HCT116 (cell line): ENCODE measurements at regions of chr5 and their contacts with region 1.

Region 1: DNA sequence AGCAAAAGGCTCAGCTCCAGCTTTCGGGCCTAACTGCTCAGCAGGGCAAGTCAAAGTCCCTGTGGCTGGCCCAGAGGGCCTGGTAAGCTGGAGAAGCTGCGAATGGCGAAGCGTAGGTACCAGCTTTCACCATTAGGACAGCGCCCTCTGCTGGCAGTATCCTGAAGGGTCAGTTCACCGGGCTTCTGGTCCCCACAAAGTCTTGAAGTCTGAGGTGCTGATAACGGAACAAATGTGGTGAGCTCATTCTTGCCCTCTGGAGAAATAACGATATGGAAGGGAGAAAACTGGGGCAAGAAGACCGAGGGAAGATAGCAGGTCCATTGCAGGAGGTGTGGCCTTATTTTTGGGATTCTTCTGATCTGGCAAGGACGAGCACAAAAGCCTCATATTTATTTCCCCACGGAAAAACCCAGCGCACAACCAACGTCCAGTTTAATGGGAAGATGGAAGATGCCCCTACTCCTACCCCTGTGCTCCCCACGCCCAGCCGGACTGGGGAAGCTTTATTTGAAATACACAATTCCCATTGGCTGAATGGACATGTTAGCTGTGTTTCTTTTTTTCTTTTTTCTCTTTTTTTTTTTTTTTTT is 7.2 kb downstream of the SOWAHA start:
- DNase-seq: peak; percentile 81
- ATAC-seq: peak; percentile 94
- H3K4me3 ChIP-seq: no peak overlapping the region
- H3K27ac ChIP-seq: no peak overlapping the region
- H3K4me1 ChIP-seq: peaks cover 0 to 11% of the 10 kb centered on the region in 2 experiments; a peak in 1 of 4 replicates
- H3K27me3 ChIP-seq: no peaks in the 10 kb centered on the region
- CTCF ChIP-seq: peak; percentile 90 to 94 (median 91)
- POLR2A ChIP-seq: no peak
- RAD21 ChIP-seq: peak; percentile 95

Region 2: GRCh38 chr5:132526290-132526973 is 293.8 kb before region 1 on chr5:
- CTCF ChIA-PET with region 1: interaction called, 33 read pairs
- POLR2A ChIA-PET with region 1: no interaction called
- RAD21 ChIA-PET with region 1: interaction called in 1 of 2 experiments, 4 read pairs
- intact Hi-C with region 1: loop called (anchors 1 kb)
- DNase-seq: peak; percentile 44
- ATAC-seq: peak; percentile 96
- H3K4me3 ChIP-seq: peak overlapping the region in 1 of 2 experiments; percentile 37; a peak in 1 of 4 replicates
- H3K27ac ChIP-seq: no peak overlapping the region
- H3K4me1 ChIP-seq: peaks cover 0 to 9% of the 10 kb centered on the region in 2 experiments; a peak in 1 of 4 replicates
- H3K27me3 ChIP-seq: no peaks in the 10 kb centered on the region
- CTCF ChIP-seq: peak; percentile 78 to 99 (median 98)
- POLR2A ChIP-seq: no peak
- RAD21 ChIP-seq: peak; percentile 75

Region 3: GRCh38 chr5:132591145-132591544 is 229.1 kb before region 1 on chr5:
- CTCF ChIA-PET with region 1: interaction called, 3 read pairs
- POLR2A ChIA-PET with region 1: no interaction called
- RAD21 ChIA-PET with region 1: interaction called in 1 of 2 experiments, 3 read pairs
- intact Hi-C with region 1: loop called (anchors 1 kb)
- DNase-seq: peak; percentile 3
- ATAC-seq: no peak
- H3K4me3 ChIP-seq: no peak overlapping the region
- H3K27ac ChIP-seq: no peak overlapping the region
- H3K4me1 ChIP-seq: no peaks in the 10 kb centered on the region
- H3K27me3 ChIP-seq: no peaks in the 10 kb centered on the region
- CTCF ChIP-seq: peak in 1 of 3 experiments; percentile 25; a peak in 1 of 6 replicates
- POLR2A ChIP-seq: no peak
- RAD21 ChIP-seq: peak; percentile 34

Region 4: DNA sequence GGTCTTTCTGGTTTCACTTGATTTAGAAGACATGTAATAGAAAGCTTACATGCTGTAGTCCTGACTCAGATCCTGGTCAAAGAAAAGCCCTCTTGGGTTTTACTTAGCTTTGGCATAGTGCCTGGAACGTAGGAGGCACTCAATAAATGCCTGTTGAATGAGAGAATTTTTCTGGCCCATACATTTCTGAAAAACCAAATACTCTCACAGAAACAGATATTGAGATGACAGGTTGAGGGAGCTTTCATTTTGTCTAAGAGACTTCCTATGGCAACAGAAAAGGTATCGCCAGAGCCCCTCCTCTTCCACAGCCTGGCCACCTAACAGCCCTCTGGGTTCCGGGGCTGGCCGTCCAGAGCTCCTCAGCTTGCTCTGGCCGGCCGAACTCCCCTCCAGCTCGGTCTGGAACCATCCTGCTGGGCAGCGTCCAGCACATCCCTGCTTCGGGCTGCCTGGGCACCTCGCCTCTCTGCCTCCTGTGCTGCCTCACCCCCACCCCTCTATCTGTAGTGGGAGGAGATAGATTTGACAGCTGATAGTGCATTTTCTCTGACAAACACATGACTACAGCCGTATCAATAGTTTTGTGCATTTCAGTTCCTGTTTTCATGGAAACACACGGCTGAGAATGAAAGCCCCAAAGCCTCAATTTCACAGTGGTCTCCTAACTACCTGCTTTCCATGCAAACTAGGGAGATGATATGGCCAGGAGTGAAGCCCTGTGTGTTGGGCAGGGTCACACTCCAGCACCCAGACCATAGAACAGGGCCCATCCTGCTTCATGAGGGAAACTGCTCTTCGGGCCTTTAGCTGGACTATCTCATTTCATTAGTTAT is 145.4 kb before region 1 on chr5:
- CTCF ChIA-PET with region 1: interaction called, 3 read pairs
- POLR2A ChIA-PET with region 1: no interaction called
- RAD21 ChIA-PET with region 1: no interaction called
- intact Hi-C with region 1: loop called (anchors 1 kb)
- DNase-seq: peak; percentile 26
- ATAC-seq: no peak
- H3K4me3 ChIP-seq: 0 out of 4 replicates have a peak overlapping the region, but pooled peaks of 1 of the 2 experiments have one; percentile 1
- H3K27ac ChIP-seq: no peak overlapping the region
- H3K4me1 ChIP-seq: peaks cover 24 to 34% of the 10 kb centered on the region in 2 experiments
- H3K27me3 ChIP-seq: no peaks in the 10 kb centered on the region
- CTCF ChIP-seq: no peak
- POLR2A ChIP-seq: no peak
- RAD21 ChIP-seq: no peak

Region 5: GRCh38 chr5:132753135-132753987 is 66.9 kb before region 1 on chr5:
- CTCF ChIA-PET with region 1: interaction called, 31 read pairs
- POLR2A ChIA-PET with region 1: interaction called, 4 read pairs
- RAD21 ChIA-PET with region 1: interaction called, 3 to 6 read pairs
- intact Hi-C with region 1: loop called (anchors 2 kb)
- DNase-seq: no peak
- ATAC-seq: peak; percentile 77
- H3K4me3 ChIP-seq: no peak overlapping the region
- H3K27ac ChIP-seq: no peak overlapping the region
- H3K4me1 ChIP-seq: no peaks in the 10 kb centered on the region
- H3K27me3 ChIP-seq: no peaks in the 10 kb centered on the region
- CTCF ChIP-seq: peak in 1 of 3 experiments; percentile 20; a peak in 1 of 6 replicates
- POLR2A ChIP-seq: no peak
- RAD21 ChIP-seq: peak; percentile 47

Region 6: GRCh38 chr5:132807163-132807838 is 13.0 kb before region 1 on chr5:
- CTCF ChIA-PET with region 1: interaction called, 69 read pairs
- POLR2A ChIA-PET with region 1: no interaction called
- RAD21 ChIA-PET with region 1: interaction called, 4 to 8 read pairs
- intact Hi-C with region 1: no loop called
- DNase-seq: peak; percentile 57
- ATAC-seq: peak; percentile 98
- H3K4me3 ChIP-seq: no peak overlapping the region
- H3K27ac ChIP-seq: peak overlapping the region; percentile 18; the same call in 1 of the 2 replicates
- H3K4me1 ChIP-seq: peaks cover 8 to 11% of the 10 kb centered on the region in 2 experiments
- H3K27me3 ChIP-seq: no peaks in the 10 kb centered on the region
- CTCF ChIP-seq: peak; percentile 54 to 70 (median 60); a peak in 5 of 6 replicates
- POLR2A ChIP-seq: no peak
- RAD21 ChIP-seq: peak; percentile 62

Region 7: GRCh38 chr5:132836852-132837251 is 16.6 kb after region 1 on chr5:
- CTCF ChIA-PET with region 1: interaction called, 11 read pairs
- POLR2A ChIA-PET with region 1: no interaction called
- RAD21 ChIA-PET with region 1: no interaction called
- intact Hi-C with region 1: no loop called
- DNase-seq: no peak
- ATAC-seq: no peak
- H3K4me3 ChIP-seq: no peak overlapping the region
- H3K27ac ChIP-seq: no peak overlapping the region
- H3K4me1 ChIP-seq: 0 out of 4 replicates have a peak, but pooled peaks cover 0 to 4% of the 10 kb centered on the region in 2 experiments
- H3K27me3 ChIP-seq: no peaks in the 10 kb centered on the region
- CTCF ChIP-seq: no peak
- POLR2A ChIP-seq: no peak
- RAD21 ChIP-seq: no peak

Region 8: DNA sequence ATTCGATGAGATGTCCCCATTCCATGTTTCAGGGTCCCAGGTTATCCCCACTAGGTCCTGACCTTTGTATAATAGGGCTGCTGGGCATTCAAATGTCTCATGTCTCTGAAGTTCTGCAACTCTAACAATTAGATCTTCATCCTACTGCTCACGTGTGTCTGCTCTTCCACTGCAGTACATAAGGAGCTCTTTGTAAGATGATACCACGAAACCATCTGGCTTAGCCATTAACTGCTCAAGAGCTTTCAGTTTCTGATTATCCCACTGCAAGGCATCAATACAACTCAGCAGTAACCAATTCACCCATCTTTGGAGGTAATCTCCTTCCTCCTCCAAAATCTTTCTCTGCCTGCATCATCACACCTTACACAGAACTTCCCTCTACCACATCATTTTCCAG is 1455.6 kb after region 1 on chr5:
- CTCF ChIA-PET with region 1: no interaction called
- POLR2A ChIA-PET with region 1: no interaction called
- RAD21 ChIA-PET with region 1: no interaction called
- intact Hi-C with region 1: no loop called
- DNase-seq: no peak
- ATAC-seq: no peak
- H3K4me3 ChIP-seq: no peak overlapping the region
- H3K27ac ChIP-seq: no peak overlapping the region
- H3K4me1 ChIP-seq: no peaks in the 10 kb centered on the region
- H3K27me3 ChIP-seq: no peaks in the 10 kb centered on the region
- CTCF ChIP-seq: no peak
- POLR2A ChIP-seq: no peak
- RAD21 ChIP-seq: no peak